IMR-90 (cell line): ENCODE measurements at regions of chr13 and their contacts with region 1.

Region 1: DNA sequence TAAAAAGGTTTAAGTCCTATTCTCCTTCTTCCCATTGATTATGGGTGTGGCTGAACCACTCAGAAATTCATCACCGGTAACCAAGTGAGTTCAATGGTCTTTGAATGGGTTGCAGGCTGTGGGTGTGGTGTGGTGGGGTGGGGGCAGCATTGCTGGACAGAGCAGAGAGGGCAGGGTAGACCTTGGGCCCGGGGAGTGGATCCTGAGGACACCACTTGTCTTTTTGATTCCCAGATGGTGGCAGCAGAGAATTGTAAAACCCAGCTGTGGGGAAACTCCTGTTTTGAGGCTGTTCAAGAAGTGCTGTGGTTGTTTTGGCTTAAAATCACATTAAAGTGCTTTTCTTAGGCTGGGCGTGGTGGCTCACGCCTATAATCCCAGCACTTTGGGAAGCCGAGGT is 45.8 kb upstream of the RGCC start:
- DNase-seq: peak; percentile 71
- ATAC-seq: peak; percentile 98
- H3K4me3 ChIP-seq: no peak overlapping the region
- H3K27ac ChIP-seq: no peak overlapping the region
- H3K4me1 ChIP-seq: no peaks in the 10 kb centered on the region
- H3K27me3 ChIP-seq: no peaks in the 10 kb centered on the region
- CTCF ChIP-seq: peak; percentile 67
- POLR2A ChIP-seq: no peak
- RAD21 ChIP-seq: peak; percentile 78

Region 2: DNA sequence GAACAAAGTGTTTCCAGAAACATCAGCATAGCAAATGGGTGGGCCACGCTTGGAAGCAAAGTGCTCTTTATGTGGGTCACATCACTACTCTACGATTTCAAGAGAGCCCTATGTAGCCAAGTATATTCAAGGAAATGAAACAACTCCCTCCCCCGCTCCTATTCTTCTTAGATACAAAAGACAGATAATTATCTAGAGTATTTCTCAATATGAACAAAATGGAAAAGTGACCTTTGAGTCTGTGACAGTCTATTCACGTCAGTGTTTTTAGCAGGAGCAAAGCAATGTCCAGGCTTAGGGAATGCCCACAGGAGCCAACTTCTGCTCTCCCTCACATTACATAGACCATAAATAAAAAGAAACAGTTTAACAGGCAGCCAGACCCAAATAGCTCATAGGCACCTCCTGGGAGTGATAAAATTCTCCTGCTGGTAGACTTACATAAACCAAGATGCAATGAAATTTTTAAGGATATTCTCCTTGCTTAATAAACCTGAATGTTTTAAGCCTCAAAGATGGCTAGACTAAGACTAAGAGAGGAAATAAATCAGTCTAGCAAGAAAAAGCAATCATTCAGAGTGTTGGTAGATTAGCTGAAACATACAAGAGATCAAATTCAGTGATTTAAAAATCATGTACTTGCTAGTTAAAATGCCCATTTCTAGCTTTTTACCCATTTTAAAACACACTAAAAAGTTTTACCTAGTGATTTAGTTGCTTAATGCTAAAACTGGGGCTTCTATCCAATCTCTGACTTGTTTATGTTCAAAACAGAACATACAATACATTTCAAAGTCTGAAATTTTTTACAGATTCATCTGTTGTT is 228.6 kb after region 1 on chr13:
- CTCF ChIA-PET with region 1: interaction called, 10 read pairs
- POLR2A ChIA-PET with region 1: no interaction called
- dilution Hi-C with region 1: no loop called
- in situ Hi-C with region 1: no loop called
- intact Hi-C with region 1: no loop called
- DNase-seq: no peak
- ATAC-seq: peak; percentile 33; the same call in 1 of the 2 replicates
- H3K4me3 ChIP-seq: no peak overlapping the region
- H3K27ac ChIP-seq: peak overlapping the region; percentile 68
- H3K4me1 ChIP-seq: peaks cover 25% of the 10 kb centered on the region
- H3K27me3 ChIP-seq: no peaks in the 10 kb centered on the region
- CTCF ChIP-seq: no peak
- POLR2A ChIP-seq: no peak
- RAD21 ChIP-seq: no peak

Region 3: DNA sequence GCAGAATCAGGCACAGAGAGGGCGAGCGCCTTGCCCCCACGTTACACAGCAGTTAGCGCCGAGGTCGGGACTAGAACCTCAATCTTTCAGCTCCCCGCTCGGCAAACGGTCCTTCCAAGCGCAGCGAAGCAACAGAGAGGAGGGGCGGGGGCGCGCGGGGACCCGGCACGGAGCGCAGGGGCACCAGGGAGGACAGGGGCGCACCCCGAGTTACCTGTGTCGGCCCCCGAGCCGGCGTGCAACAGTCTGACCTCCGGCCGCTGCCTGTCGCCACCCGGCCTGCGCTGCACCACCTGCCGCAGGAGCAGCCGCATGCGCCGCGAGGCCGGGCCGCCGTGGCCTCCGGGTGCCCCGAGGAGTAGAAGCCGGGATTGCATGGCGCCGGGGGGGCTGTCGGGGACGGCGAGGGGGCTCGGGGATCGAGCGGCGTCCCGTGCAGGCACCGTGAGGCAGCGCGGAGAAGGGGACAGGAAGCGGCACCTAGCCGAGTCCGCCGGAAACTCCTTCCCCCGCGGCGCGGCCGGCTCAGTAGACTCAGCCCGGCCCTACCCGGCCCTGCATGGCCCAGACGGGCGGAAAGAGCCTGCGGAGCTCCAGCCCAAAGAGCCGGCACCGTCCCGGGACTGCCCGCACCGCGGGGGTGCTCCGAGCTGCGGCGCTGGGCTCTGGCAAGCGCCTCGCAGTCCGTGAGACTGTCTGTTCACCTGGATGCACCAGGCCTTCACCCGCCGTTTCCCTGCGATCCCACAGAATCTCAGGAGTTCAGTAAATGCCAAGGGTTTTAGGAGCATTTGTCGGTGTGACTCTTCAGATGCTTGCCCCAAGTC is 549.3 kb after region 1 on chr13 and contains the start of gene VWA8:
- CTCF ChIA-PET with region 1: no interaction called
- POLR2A ChIA-PET with region 1: no interaction called
- dilution Hi-C with region 1: no loop called
- in situ Hi-C with region 1: no loop called
- intact Hi-C with region 1: no loop called
- DNase-seq: peak; percentile 78
- ATAC-seq: peak; percentile 95
- H3K4me3 ChIP-seq: peak within 1 kb of the TSS; percentile 82
- H3K27ac ChIP-seq: peak within 1 kb of the TSS; percentile 96
- H3K4me1 ChIP-seq: peaks cover 3% of the 10 kb centered on the region; the same call in 1 of the 2 replicates
- H3K27me3 ChIP-seq: no peaks in the 10 kb centered on the region
- CTCF ChIP-seq: no peak
- POLR2A ChIP-seq: no peak
- RAD21 ChIP-seq: no peak; the same call in 1 of the 2 replicates
- total RNA-seq, gene VWA8: 18.3 and 19.7 TPM in 2 replicates

Region 4: DNA sequence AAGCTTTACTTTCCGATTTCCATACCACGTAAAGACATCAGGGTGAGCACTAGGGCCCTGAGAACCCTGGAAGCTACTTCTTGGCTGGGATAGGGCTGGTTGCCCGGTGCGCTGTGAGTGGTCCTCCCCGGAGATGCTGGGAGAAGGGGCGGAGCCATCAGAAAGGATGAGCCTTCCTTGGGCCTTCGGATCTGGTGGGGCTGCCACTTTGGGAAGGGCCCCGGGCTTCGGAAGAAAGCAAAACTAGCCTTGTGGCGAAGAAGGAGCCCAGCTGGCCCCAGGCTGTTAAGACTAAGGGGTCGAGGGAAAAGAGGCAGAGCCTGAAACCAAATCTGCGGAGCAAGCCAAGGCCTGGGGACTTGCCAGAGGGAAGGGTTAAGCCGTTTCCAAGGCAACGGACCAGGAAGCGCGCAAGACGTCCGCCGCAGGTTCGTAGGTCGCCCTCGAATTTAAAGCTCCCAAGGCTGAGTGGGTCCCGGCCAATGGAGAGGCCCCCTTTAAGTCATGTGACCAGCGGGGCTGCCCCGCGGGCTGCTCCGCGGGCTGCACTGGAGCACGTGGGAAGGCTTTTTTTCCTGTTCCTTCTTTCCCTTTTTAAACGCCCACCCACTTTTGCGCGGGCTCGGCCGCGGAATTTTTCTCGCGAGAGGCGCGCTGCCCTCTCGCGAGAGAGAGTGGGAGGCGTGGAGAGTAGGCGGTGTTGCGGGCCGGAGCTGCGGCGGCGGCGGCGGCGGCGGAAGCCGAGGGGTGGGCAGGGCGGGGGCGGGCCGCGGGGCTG is 860.0 kb after region 1 on chr13:
- CTCF ChIA-PET with region 1: no interaction called
- POLR2A ChIA-PET with region 1: interaction called, 10 read pairs
- dilution Hi-C with region 1: no loop called
- in situ Hi-C with region 1: no loop called
- intact Hi-C with region 1: no loop called
- DNase-seq: peak; percentile 98
- ATAC-seq: peak; percentile 91
- H3K4me3 ChIP-seq: peak overlapping the region; percentile 73
- H3K27ac ChIP-seq: peak overlapping the region; percentile 71
- H3K4me1 ChIP-seq: peaks cover 6% of the 10 kb centered on the region
- H3K27me3 ChIP-seq: no peaks in the 10 kb centered on the region
- CTCF ChIP-seq: no peak
- POLR2A ChIP-seq: no peak; the same call in 1 of the 2 replicates
- RAD21 ChIP-seq: no peak

Region 5: GRCh38 chr13:42991892-42992763 is 1580.6 kb after region 1 on chr13 and contains the start of gene EPSTI1:
- CTCF ChIA-PET with region 1: no interaction called
- POLR2A ChIA-PET with region 1: no interaction called
- dilution Hi-C with region 1: no loop called
- in situ Hi-C with region 1: no loop called
- intact Hi-C with region 1: no loop called
- DNase-seq: peak; percentile 74
- ATAC-seq: peak; percentile 84
- H3K4me3 ChIP-seq: peak within 1 kb of the TSS; percentile 43
- H3K27ac ChIP-seq: peak within 1 kb of the TSS; percentile 43
- H3K4me1 ChIP-seq: peaks cover 2% of the 10 kb centered on the region
- H3K27me3 ChIP-seq: no peaks in the 10 kb centered on the region
- CTCF ChIP-seq: no peak
- POLR2A ChIP-seq: no peak
- RAD21 ChIP-seq: no peak
- total RNA-seq, gene EPSTI1: 0.90 and 1.1 TPM in 2 replicates